ENCODE measurements at regions of chr10 and their contacts with region 1.

Region 1: GRCh38 chr10:69757553-69758309 is 44.0 kb upstream of the COL13A1 start:
- DNase-seq: peak; percentile 21
- H3K4me3 ChIP-seq: no peak overlapping the region
- H3K27ac ChIP-seq: no peak overlapping the region
- H3K4me1 ChIP-seq: no peaks in the 10 kb centered on the region
- H3K27me3 ChIP-seq: no peaks in the 10 kb centered on the region
- CTCF ChIP-seq: no peak

Region 2: DNA sequence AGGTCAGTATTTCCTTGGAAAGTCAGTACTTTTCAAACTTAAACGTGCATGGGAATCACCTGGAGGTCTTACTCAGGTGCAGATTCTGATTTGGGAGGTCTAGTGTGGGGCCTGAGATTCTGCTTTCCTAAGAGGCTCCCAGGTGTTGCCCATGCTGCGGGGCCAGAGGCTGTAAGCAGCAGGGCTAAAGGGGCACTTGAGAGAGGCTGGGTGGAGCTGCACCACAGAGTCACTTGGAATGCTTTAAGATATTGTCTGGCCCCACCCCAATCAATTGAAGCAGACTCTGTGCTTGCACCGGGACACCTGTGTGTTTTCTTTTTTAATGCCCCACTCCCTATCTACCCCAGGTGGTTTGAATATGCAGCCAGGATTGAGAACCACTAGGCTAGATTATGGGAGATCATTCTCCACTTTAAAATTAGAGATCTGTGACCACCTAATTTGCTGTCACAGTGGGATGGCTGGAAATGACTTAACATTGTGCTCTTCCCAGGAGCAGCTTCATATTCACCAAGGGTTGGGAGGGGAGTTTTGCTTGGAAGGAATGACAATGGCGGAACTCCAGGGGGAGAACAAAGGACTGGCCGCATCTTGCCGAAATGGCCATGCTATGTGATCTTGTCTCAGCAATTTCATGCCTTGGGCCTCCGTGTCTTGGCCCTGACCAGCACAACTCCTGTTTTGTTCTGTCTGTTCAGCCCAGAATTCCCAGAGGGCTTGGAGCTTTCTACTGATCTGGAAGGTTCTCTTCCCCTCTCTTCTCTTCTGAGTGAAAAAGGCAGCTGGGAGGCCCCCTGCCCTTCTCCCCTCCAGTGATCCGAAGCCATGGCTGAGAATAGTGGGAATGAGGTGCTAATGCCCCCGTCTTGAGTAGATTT is 47.5 kb before region 1 on chr10:
- CTCF ChIA-PET with region 1: no interaction called
- dilution Hi-C with region 1: loop called (anchors 5 kb)
- in situ Hi-C with region 1: no loop called
- intact Hi-C with region 1: no loop called
- DNase-seq: no peak
- H3K4me3 ChIP-seq: no peak overlapping the region
- H3K27ac ChIP-seq: no peak overlapping the region
- H3K4me1 ChIP-seq: no peaks in the 10 kb centered on the region
- H3K27me3 ChIP-seq: no peaks in the 10 kb centered on the region
- CTCF ChIP-seq: no peak

Region 3: DNA sequence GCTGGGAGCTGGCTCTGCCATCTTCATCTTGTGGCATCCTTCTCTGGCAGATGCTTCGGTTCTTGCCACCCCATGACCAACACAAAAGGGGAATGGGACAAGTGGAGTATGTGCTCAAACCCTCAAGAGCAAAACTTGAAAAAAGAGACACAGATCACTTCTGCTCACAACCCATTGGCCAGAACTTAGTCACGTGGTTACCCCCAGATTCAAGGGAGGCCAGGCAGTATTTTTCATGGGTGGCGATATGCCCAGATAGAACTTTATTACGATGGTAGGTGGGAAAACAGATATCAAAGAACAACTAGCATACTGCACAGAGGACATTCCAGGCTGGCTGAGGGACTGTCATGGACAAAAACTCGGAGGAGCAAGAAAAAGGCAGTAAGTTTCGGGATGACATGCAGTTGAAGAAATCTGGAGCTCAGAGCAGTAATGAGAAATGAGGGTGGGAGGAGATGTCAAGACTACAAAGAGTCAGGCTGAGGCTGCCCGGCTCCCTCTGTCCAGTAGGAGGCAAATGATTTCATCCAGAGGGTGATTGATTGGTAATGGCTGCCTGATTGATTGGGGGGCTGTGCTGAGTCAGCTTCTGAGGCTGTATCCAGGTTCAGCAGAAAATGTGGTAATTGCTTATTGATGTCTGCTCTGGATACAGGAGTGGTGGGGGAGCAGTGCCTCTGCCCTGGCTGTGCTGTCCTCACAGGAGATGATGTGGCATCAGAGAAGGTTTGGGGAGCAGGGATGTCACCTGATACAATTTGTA is 69.2 kb after region 1 on chr10:
- CTCF ChIA-PET with region 1: no interaction called
- dilution Hi-C with region 1: loop called (anchors 5 kb)
- in situ Hi-C with region 1: no loop called
- intact Hi-C with region 1: no loop called
- DNase-seq: no peak
- H3K4me3 ChIP-seq: no peak overlapping the region
- H3K27ac ChIP-seq: no peak overlapping the region
- H3K4me1 ChIP-seq: no peaks in the 10 kb centered on the region
- H3K27me3 ChIP-seq: no peaks in the 10 kb centered on the region
- CTCF ChIP-seq: peak; percentile 3 to 4

Region 4: GRCh38 chr10:69861251-69862240 is 103.8 kb after region 1 on chr10:
- CTCF ChIA-PET with region 1: interaction called, 10 read pairs
- dilution Hi-C with region 1: no loop called
- in situ Hi-C with region 1: no loop called
- intact Hi-C with region 1: no loop called
- DNase-seq: peak; percentile 92
- H3K4me3 ChIP-seq: no peak overlapping the region
- H3K27ac ChIP-seq: peak overlapping the region; percentile 68
- H3K4me1 ChIP-seq: peaks cover 55% of the 10 kb centered on the region
- H3K27me3 ChIP-seq: no peaks in the 10 kb centered on the region
- CTCF ChIP-seq: peak; percentile 55 to 67

Region 5: DNA sequence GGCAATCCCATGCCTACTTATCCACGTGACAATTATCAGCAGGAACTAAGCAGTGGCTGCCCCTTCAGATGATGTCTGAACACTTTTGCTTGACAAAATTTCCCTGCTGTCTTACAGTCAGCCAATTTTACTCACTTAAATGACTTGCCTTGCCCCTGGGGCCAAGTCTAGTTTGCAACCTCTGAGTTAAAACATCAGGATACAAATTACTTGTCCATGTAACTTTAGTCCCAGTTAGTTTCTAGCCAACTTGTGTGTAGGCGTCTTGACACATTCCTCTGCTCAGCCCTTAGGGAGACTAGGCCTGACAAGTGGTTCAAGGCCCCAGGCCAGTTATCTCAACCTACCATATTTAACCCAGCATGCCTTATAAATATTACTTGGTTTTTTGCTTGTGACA is 400.4 kb after region 1 on chr10:
- CTCF ChIA-PET with region 1: no interaction called
- dilution Hi-C with region 1: no loop called
- in situ Hi-C with region 1: no loop called
- intact Hi-C with region 1: no loop called
- DNase-seq: no peak
- H3K4me3 ChIP-seq: no peak overlapping the region
- H3K27ac ChIP-seq: no peak overlapping the region
- H3K4me1 ChIP-seq: peaks cover under 1% of the 10 kb centered on the region
- H3K27me3 ChIP-seq: no peaks in the 10 kb centered on the region
- CTCF ChIP-seq: no peak

Measured in mammary epithelial cell (primary cell).